ENCODE measurements at regions of chr4 and their contacts with region 1.

Region 1: GRCh38 chr4:110049951-110050925 is 137.6 kb downstream of the EGF start:
- DNase-seq: no peak
- ATAC-seq: peak; percentile 80
- H3K4me3 ChIP-seq: no peak overlapping the region
- H3K27ac ChIP-seq: no peak overlapping the region
- H3K4me1 ChIP-seq: no peaks in the 10 kb centered on the region
- H3K27me3 ChIP-seq: no peaks in the 10 kb centered on the region
- CTCF ChIP-seq: peak; percentile 82

Region 2: GRCh38 chr4:109947457-109947856 is 102.8 kb before region 1 on chr4:
- intact Hi-C with region 1: no loop called
- DNase-seq: no peak
- ATAC-seq: no peak
- H3K4me3 ChIP-seq: no peak overlapping the region
- H3K27ac ChIP-seq: no peak overlapping the region
- H3K4me1 ChIP-seq: no peaks in the 10 kb centered on the region
- H3K27me3 ChIP-seq: no peaks in the 10 kb centered on the region
- CTCF ChIP-seq: no peak

Region 3: GRCh38 chr4:110211007-110211769 is 160.9 kb after region 1 on chr4:
- intact Hi-C with region 1: loop called (anchors 5 kb)
- DNase-seq: no peak
- ATAC-seq: peak; percentile 65
- H3K4me3 ChIP-seq: no peak overlapping the region
- H3K27ac ChIP-seq: no peak overlapping the region
- H3K4me1 ChIP-seq: no peaks in the 10 kb centered on the region
- H3K27me3 ChIP-seq: no peaks in the 10 kb centered on the region
- CTCF ChIP-seq: peak; percentile 91